ENCODE measurements at regions of chr2 and their contacts with region 1.

Region 1: GRCh38 chr2:176554101-176555048 is 285.1 kb downstream of the MTX2 start:
- DNase-seq: peak; percentile 52
- ATAC-seq: peak; percentile 75
- H3K4me3 ChIP-seq: peak overlapping the region; percentile 38
- H3K27ac ChIP-seq: no peak overlapping the region
- H3K4me1 ChIP-seq: no peaks in the 10 kb centered on the region
- H3K27me3 ChIP-seq: peaks cover 16% of the 10 kb centered on the region
- CTCF ChIP-seq: peak; percentile 80
- POLR2A ChIP-seq: no peak
- RAD21 ChIP-seq: peak; percentile 62

Region 2: DNA sequence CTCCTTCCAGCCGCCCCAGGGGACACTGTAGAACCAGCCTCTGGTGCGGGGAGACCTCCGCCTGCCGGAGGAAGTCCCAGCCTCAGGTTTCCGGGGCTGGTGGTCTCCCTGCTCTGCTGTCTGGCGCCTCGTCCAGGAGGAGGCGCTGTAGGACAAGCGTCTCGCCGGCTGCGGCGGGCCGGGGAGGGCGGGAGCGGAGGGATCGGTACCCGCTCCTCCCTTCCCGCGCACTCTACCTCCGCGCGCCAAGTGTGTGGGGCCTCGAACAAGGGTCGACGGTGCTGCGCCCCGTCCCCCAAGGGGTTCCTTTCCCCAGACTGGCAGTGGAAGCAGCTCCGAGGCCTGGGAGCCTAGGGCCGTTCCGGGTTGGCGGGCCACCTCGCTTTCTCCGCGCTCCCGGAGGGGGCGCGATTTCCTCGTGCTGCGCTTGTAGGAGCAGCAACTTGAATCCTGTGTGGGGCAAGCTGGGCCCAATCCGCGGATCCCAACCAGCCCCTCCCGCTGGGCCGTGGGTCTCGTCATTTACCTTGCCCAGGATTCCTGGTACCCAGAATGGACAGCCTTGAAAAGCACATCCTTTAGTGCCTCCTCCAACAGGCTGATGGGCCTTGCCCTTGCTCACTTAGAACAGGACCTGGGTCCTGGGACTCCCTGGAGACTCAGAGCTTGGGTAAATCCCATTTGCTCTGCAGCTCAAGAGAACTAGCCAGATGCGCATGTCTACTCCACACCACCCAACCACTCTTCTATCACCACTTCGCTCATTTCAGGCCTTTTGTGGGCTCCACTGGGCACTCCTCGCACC is 413.7 kb before region 1 on chr2:
- CTCF ChIA-PET with region 1: interaction called, 10 read pairs
- POLR2A ChIA-PET with region 1: no interaction called
- dilution Hi-C with region 1: no loop called
- in situ Hi-C with region 1: loop called (anchors 5 kb)
- intact Hi-C with region 1: loop called (anchors 1 kb)
- DNase-seq: peak; percentile 46
- ATAC-seq: peak; percentile 95
- H3K4me3 ChIP-seq: peak overlapping the region; percentile 50
- H3K27ac ChIP-seq: no peak overlapping the region
- H3K4me1 ChIP-seq: no peaks in the 10 kb centered on the region
- H3K27me3 ChIP-seq: peaks cover 74% of the 10 kb centered on the region
- CTCF ChIP-seq: peak; percentile 82
- POLR2A ChIP-seq: no peak
- RAD21 ChIP-seq: peak; percentile 93

Region 3: DNA sequence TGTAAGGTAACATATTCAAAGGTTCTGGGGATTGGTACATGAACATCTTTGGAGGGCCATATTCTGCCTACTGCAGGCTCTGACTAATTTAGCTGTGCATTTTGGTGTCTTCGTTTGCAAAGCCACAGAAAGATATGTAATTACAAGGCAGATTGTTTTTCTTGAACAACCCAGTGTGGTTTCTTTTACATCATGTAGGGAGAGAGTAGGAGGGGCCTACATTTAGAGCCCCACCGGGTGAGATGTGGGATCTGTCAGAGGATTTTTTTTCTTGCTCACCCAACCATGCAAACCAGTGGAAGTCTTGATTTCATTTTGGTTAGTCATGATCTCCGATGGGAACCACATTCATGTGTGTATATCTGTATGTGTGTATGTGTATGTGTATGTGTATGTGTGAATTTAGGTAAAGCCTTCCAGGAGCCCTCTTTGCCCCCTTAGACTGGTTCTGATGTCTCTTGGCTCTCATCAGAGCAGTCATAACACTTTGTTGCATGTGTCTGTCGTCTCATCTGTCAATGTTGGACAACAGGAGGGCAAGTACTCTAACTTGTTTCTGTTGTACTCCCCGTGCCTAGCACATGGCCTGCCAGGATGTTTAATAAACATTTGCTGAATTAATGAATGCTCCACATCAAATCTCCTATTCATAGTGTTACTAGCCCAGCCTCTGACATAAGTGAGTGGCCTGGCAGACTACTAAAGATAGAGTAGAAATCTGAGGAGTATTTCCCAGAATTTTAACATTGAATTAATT is 45.2 kb before region 1 on chr2:
- CTCF ChIA-PET with region 1: no interaction called
- POLR2A ChIA-PET with region 1: no interaction called
- dilution Hi-C with region 1: no loop called
- in situ Hi-C with region 1: no loop called
- intact Hi-C with region 1: no loop called
- DNase-seq: no peak
- ATAC-seq: no peak
- H3K4me3 ChIP-seq: no peak overlapping the region
- H3K27ac ChIP-seq: no peak overlapping the region
- H3K4me1 ChIP-seq: no peaks in the 10 kb centered on the region
- H3K27me3 ChIP-seq: peaks cover 1% of the 10 kb centered on the region
- CTCF ChIP-seq: no peak
- POLR2A ChIP-seq: no peak
- RAD21 ChIP-seq: no peak

Region 4: GRCh38 chr2:176745543-176746200 is 191.3 kb after region 1 on chr2:
- CTCF ChIA-PET with region 1: no interaction called
- POLR2A ChIA-PET with region 1: no interaction called
- dilution Hi-C with region 1: no loop called
- in situ Hi-C with region 1: no loop called
- intact Hi-C with region 1: no loop called
- DNase-seq: no peak
- ATAC-seq: no peak
- H3K4me3 ChIP-seq: no peak overlapping the region
- H3K27ac ChIP-seq: no peak overlapping the region
- H3K4me1 ChIP-seq: no peaks in the 10 kb centered on the region
- H3K27me3 ChIP-seq: no peaks in the 10 kb centered on the region
- CTCF ChIP-seq: no peak
- POLR2A ChIP-seq: no peak
- RAD21 ChIP-seq: no peak

Region 5: DNA sequence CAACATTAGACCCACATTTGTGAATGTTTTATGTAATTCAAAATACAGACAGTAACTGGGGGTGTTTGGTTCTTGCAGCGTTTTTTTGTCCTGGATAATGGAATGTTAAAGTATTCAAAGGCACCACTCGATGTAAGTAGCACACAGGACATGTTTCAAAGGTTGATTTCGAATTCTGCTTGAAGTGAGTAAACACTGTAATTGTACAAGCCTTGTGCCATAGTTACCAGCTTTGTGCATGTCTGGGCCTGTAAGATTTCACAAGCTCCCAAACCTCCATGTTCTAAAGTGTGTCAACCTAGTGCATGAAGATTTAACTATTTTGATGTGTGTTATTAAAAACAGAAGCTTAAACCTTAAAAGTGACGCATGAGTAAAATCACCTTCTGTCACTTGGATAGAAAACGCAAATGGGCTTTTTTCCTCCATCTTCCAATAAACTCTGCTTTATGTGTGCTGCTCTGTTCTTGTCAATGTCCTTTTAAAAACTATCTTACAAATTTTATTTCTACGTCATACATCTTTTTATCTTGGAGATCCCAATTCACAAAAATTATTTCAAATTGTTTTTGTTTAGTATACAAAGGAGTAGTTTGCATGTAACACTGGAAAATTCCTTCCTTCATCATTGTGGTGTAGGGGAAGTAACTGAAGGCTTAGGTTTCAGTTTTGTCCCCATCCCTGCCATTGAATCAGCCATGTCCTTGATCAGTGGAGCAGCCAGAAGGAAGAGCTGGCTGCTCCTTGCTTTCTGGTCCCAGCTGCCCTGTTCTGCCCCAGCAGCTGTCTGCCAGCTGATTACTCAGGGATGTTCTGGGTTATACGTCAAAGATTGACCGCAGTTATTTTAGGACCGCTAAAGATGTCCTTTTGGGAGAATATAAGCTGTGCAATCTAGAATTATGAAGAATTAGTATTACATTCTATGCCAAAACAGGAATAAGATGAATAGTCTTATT is 1777.4 kb after region 1 on chr2:
- CTCF ChIA-PET with region 1: no interaction called
- POLR2A ChIA-PET with region 1: no interaction called
- dilution Hi-C with region 1: no loop called
- in situ Hi-C with region 1: no loop called
- intact Hi-C with region 1: no loop called
- DNase-seq: no peak
- ATAC-seq: no peak
- H3K4me3 ChIP-seq: no peak overlapping the region
- H3K27ac ChIP-seq: no peak overlapping the region
- H3K4me1 ChIP-seq: peaks cover 4% of the 10 kb centered on the region
- H3K27me3 ChIP-seq: no peaks in the 10 kb centered on the region
- CTCF ChIP-seq: no peak
- POLR2A ChIP-seq: no peak
- RAD21 ChIP-seq: no peak